PC-9 (cell line): ENCODE measurements at regions of chr3 and their contacts with region 1.

Region 1: GRCh38 chr3:183385698-183386613 is 42.5 kb downstream of the MCF2L2 start:
- DNase-seq: peak; percentile 57 to 75
- H3K4me3 ChIP-seq: no peak overlapping the region
- H3K27ac ChIP-seq: peak overlapping the region; percentile 5; the same call in 1 of the 2 replicates
- H3K4me1 ChIP-seq: peaks cover 27% of the 10 kb centered on the region
- H3K27me3 ChIP-seq: no peaks in the 10 kb centered on the region
- CTCF ChIP-seq: peak; percentile 94

Region 2: DNA sequence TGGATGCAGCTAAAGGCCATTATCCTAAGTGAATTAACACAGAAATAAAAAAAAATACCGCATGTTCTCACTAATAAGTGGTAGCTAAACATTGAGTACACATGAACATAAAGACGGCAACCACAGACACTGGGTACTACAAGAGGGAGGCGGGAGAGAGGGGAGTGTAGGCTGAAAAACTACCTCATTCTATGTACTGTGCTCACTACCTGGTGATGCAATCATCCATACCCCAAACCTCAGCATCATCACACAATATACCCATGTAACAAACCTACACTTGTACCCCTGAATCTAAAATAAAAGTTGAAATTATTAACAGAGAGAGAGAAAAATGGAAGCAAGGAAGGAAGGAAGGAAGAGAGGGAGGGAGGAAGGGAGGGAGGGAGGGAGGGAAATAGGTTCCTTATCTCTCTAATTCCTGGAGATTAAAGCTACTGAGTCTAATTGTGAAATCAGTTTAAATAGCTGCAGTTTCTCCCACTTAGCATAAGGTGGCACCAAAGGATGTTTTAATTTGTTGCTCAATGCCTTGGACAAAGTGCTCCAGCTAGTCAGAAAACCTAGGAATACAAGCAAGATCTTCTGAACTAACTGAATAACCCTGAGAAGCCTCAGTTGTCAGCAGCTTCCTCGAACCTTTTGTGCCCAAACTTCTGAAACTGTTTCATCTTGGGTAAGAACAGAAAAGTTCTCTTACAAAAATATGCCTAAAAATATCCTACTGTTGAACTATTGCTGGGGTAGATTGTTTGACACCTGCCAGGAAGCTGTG is 672.0 kb before region 1 on chr3:
- CTCF ChIA-PET with region 1: interaction called, 5 read pairs
- POLR2A ChIA-PET with region 1: no interaction called
- intact Hi-C with region 1: loop called (anchors 1 kb)
- DNase-seq: peak; percentile 24 to 86
- H3K4me3 ChIP-seq: no peak overlapping the region
- H3K27ac ChIP-seq: no peak overlapping the region
- H3K4me1 ChIP-seq: peaks cover 24% of the 10 kb centered on the region
- H3K27me3 ChIP-seq: no peaks in the 10 kb centered on the region
- CTCF ChIP-seq: peak; percentile 92

Region 3: GRCh38 chr3:183122257-183122932 is 263.6 kb before region 1 on chr3:
- CTCF ChIA-PET with region 1: interaction called, 9 read pairs
- POLR2A ChIA-PET with region 1: no interaction called
- intact Hi-C with region 1: loop called (anchors 1 kb)
- DNase-seq: peak; percentile 9 to 51
- H3K4me3 ChIP-seq: no peak overlapping the region
- H3K27ac ChIP-seq: no peak overlapping the region
- H3K4me1 ChIP-seq: peaks cover 17% of the 10 kb centered on the region
- H3K27me3 ChIP-seq: no peaks in the 10 kb centered on the region
- CTCF ChIP-seq: peak; percentile 99

Region 4: DNA sequence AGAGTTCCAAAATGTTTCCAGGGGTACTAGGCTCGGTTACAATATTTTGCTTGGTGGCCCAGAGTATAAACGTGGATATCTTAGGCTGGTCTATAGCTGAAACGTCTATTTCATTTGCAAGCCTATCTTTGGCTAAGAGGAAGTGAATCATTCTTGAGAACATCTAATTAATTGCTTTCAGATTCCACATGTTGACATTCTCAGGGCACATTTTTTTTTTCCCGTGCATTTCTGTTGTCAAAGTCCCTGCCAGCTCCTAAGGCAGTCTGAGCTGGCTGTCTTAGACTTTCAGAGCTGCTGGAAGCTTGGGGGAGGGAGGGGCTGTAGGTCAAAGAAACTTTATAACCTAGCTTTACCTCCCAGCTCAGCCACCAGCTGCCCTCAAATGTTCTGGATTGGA is 200.3 kb before region 1 on chr3:
- CTCF ChIA-PET with region 1: interaction called, 85 read pairs
- POLR2A ChIA-PET with region 1: interaction called, 3 read pairs
- intact Hi-C with region 1: loop called (anchors 1 kb)
- DNase-seq: peak in 1 of 2 experiments; percentile 85
- H3K4me3 ChIP-seq: no peak overlapping the region
- H3K27ac ChIP-seq: peak overlapping the region; percentile 27
- H3K4me1 ChIP-seq: peaks cover 16% of the 10 kb centered on the region
- H3K27me3 ChIP-seq: no peaks in the 10 kb centered on the region
- CTCF ChIP-seq: no peak

Region 5: GRCh38 chr3:183265834-183266417 is 120.0 kb before region 1 on chr3:
- CTCF ChIA-PET with region 1: interaction called, 5 read pairs
- POLR2A ChIA-PET with region 1: interaction called, 8 read pairs
- intact Hi-C with region 1: loop called (anchors 1 kb)
- DNase-seq: peak; percentile 73 to 99
- H3K4me3 ChIP-seq: no peak overlapping the region; the same call in 1 of the 2 replicates
- H3K27ac ChIP-seq: peak overlapping the region; percentile 85
- H3K4me1 ChIP-seq: peaks cover 65% of the 10 kb centered on the region
- H3K27me3 ChIP-seq: no peaks in the 10 kb centered on the region
- CTCF ChIP-seq: no peak

Region 6: GRCh38 chr3:183328823-183329222 is 57.1 kb before region 1 on chr3:
- CTCF ChIA-PET with region 1: no interaction called
- POLR2A ChIA-PET with region 1: interaction called, 10 read pairs
- intact Hi-C with region 1: no loop called
- DNase-seq: peak in 1 of 2 experiments; percentile 83
- H3K4me3 ChIP-seq: no peak overlapping the region
- H3K27ac ChIP-seq: peak overlapping the region; percentile 32
- H3K4me1 ChIP-seq: peaks cover 24% of the 10 kb centered on the region
- H3K27me3 ChIP-seq: no peaks in the 10 kb centered on the region
- CTCF ChIP-seq: no peak

Region 7: DNA sequence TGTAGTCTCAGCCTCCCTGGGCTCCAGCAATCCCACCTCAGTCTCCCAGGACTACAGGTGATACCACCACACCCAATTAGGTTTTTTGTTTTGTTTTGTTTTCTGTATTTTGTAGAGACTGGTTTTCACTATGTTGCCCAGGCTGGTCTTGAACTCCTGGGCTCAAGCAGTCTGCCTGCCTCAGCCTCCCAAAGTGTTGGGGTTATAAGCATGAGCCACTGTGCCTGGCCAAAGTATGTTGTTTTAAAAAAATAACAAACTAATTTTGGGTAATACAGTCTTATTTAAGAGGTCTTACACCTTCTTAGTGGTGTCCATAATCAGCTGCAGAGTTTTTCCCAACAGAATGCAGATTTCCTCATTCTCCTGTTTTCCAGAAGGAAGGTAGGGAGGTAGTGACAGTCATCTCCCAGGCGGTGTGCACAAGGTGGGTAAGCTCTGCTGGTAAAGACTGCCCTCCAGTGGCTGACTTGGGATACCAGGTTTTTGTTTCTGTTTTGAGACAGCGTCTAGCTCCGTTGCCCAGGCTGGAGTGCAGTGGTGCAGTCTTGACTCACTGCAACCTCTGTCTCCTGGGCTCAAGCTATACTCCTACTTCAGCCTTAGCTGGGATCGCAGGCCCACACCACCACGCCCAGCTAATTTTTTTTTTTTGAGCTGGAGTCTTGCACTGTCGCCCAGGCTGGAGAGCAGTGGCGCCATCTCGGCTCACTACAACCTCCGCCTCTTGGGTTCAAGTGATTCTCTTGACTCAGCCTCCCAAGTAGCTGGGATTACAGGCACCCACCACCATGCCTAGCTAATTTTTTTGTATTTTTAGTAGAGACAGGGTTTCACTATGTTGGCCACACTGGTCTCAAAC is 381.0 kb after region 1 on chr3:
- CTCF ChIA-PET with region 1: no interaction called
- POLR2A ChIA-PET with region 1: no interaction called
- intact Hi-C with region 1: loop called (anchors 2 kb)
- DNase-seq: peak; percentile 64 to 78
- H3K4me3 ChIP-seq: no peak overlapping the region
- H3K27ac ChIP-seq: no peak overlapping the region
- H3K4me1 ChIP-seq: peaks cover 17% of the 10 kb centered on the region
- H3K27me3 ChIP-seq: no peaks in the 10 kb centered on the region
- CTCF ChIP-seq: peak; percentile 95

Region 8: DNA sequence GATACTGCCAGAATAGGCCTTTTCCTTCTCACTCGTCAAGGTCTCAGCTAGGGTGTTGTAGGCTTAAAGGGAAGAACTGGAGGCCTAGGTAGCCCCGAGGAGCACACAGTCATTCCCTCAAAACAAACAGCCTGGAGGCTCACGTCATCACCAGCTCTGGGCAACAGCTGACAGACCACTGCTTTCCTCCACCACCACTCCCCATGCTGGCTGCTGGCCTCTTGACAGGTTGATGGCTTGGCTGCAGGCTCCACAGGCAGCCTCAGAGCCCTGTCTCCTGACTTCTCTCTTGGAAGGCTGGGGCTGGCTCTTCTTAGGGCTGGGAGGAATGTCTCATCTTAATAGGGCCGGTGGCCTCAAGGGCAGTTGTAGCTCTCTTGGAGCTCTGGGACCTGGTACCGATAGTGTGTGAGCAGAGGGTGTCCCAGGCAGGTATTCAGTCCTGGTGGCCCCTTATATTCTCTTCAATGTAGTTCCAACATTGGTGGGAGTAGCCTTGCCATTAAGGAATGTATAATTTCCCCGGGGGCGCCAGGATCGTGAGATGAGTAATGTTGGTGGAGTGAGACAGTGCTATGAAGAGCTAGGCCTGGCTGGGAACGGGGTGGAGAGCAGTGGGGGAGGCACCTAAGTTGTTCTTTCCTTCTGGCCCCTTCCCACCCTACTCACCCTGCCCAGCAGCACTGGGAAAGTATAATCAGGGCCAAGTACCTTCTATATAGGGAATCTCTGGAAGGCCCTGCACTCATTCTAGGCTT is 782.6 kb after region 1 on chr3:
- CTCF ChIA-PET with region 1: no interaction called
- POLR2A ChIA-PET with region 1: no interaction called
- intact Hi-C with region 1: no loop called
- DNase-seq: no peak
- H3K4me3 ChIP-seq: no peak overlapping the region
- H3K27ac ChIP-seq: 0 out of 2 replicates have a peak overlapping the region, but pooled peaks have one; percentile 3
- H3K4me1 ChIP-seq: no peaks in the 10 kb centered on the region
- H3K27me3 ChIP-seq: no peaks in the 10 kb centered on the region
- CTCF ChIP-seq: no peak